Right ventricle myocardium inferior (tissue), 1 donor: ENCODE measurements at regions of chr2 and their contacts with region 1.

Region 1: DNA sequence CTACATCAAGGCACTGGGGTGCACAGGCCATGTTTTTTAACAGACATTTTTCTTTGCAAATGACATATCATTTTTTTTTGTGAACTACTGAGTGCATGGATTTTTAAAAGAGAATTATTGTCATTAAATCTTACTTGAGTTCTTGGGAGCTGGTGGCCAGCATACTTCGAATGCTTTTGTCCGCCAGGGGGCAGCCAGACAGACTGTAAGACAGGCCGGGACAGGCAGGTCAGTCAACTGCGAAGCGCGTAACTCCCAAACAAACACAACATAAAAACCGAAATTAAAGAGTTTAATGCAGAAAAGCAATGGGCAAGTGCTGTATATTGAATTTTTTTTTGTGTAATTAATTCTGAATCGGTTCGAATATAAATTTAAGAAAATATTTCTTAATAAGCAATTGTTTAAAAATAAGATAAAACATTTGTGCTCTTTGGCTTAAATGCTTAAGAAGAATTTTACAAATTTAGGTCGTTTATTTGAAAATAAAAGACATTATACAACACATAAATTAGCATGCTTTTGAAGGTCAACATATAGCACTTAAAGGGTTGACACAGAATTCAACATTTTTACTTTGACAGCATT is 142.2 kb upstream of the PXDN start:
- DNase-seq: peak; percentile 74
- ATAC-seq: no peak

Region 2: GRCh38 chr2:1990724-1991123 is 104.2 kb after region 1 on chr2:
- intact Hi-C with region 1: loop called (anchors 10 kb)
- DNase-seq: peak; percentile 86
- ATAC-seq: peak; percentile 92

Region 3: DNA sequence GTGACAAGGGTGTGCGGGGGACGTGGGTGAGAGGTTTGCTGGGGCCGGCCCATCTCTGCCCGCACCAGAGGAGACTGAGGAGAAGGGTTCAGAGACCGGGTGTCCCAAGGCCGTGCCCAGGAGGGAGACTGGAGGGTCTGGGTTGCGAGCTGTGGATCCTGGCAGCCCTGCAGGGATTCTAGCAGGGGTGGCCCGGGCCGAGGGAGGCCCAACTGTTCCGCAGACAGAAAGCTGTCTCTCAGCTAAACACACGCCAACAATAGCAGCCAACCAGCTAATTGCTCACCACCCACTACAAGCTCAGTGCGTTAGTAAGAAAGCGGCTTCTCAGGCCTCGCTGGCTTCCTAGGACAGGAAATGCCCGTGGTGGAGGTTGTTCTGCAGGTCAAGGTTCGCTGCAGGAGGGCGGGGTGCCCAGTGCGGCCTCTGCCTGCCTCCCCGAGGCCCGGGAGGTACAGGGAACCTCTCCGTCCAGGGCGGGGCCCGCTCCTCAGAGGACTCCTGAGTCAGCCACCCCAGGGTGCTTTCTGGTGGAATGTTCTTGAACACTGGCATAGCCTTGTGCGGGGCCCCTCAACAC is 139.8 kb after region 1 on chr2:
- intact Hi-C with region 1: no loop called
- DNase-seq: no peak
- ATAC-seq: no peak